Naive thymus-derived CD4-positive, alpha-beta T cell (primary cell): ENCODE measurements at regions of chr5 and their contacts with region 1.

Region 1: GRCh38 chr5:95961617-95962474 is at the start of gene ELL2:
- DNase-seq: peak; percentile 85 to 98 (median 90)
- ATAC-seq: peak; percentile 93
- H3K4me3 ChIP-seq: peak within 1 kb of the TSS; percentile 73
- H3K4me3 Mint-ChIP-seq: peak within 1 kb of the TSS; percentile 94 to 99 (median 96)
- H3K27ac ChIP-seq: peak within 1 kb of the TSS; percentile 90
- H3K27ac Mint-ChIP-seq: peak within 1 kb of the TSS; percentile 87 to 99 (median 98)
- H3K4me1 ChIP-seq: peaks cover 12 to 13% of the 10 kb centered on the region in 2 donors
- H3K4me1 Mint-ChIP-seq: peaks cover 30 to 43% (median 34%) of the 10 kb centered on the region in 7 donors
- H3K27me3 ChIP-seq: no peaks in the 10 kb centered on the region
- H3K27me3 Mint-ChIP-seq: peaks cover 0 to 3% (median 0%) of the 10 kb centered on the region in 5 donors
- total RNA-seq, gene ELL2: 12.6 to 65.8 (median 41.3) TPM

Region 2: GRCh38 chr5:94111209-94112004 is 1850.4 kb before region 1 on chr5:
- CTCF ChIA-PET with region 1: no interaction called
- POLR2A ChIA-PET with region 1: no interaction called
- intact Hi-C with region 1: loop called in 1 of 2 experiments (anchors 5 kb)
- DNase-seq: peak; percentile 77 to 93 (median 90)
- ATAC-seq: peak; percentile 96
- H3K4me3 ChIP-seq: peak overlapping the region; percentile 90
- H3K4me3 Mint-ChIP-seq: peak overlapping the region; percentile 88 to 97 (median 95)
- H3K27ac ChIP-seq: peak overlapping the region; percentile 85
- H3K27ac Mint-ChIP-seq: peak overlapping the region; percentile 93 to 97 (median 96)
- H3K4me1 ChIP-seq: peaks cover 8 to 10% of the 10 kb centered on the region in 2 donors
- H3K4me1 Mint-ChIP-seq: peaks cover 21 to 50% (median 47%) of the 10 kb centered on the region in 7 donors
- H3K27me3 ChIP-seq: no peaks in the 10 kb centered on the region
- H3K27me3 Mint-ChIP-seq: peaks cover 0 to 15% (median 14%) of the 10 kb centered on the region in 5 donors

Region 3: GRCh38 chr5:95620030-95620869 is 341.6 kb before region 1 on chr5 and contains the start of gene GPR150:
- CTCF ChIA-PET with region 1: no interaction called
- POLR2A ChIA-PET with region 1: no interaction called
- intact Hi-C with region 1: loop called in 1 of 2 experiments (anchors 2 kb)
- DNase-seq: peak; percentile 44 to 67 (median 61)
- ATAC-seq: peak; percentile 77
- H3K4me3 ChIP-seq: peak within 1 kb of the TSS; percentile 75
- H3K4me3 Mint-ChIP-seq: peak within 1 kb of the TSS; percentile 88 to 96 (median 92)
- H3K27ac ChIP-seq: peak within 1 kb of the TSS; percentile 71
- H3K27ac Mint-ChIP-seq: peak within 1 kb of the TSS; percentile 60 to 87 (median 81)
- H3K4me1 ChIP-seq: peaks cover 22 to 46% of the 10 kb centered on the region in 2 donors
- H3K4me1 Mint-ChIP-seq: peaks cover 34 to 82% (median 67%) of the 10 kb centered on the region in 7 donors
- H3K27me3 ChIP-seq: no peaks in the 10 kb centered on the region
- H3K27me3 Mint-ChIP-seq: peaks cover 0 to 18% (median 0%) of the 10 kb centered on the region in 5 donors
- total RNA-seq, gene GPR150: 0.48 to 1.5 (median 1.1) TPM

Region 4: DNA sequence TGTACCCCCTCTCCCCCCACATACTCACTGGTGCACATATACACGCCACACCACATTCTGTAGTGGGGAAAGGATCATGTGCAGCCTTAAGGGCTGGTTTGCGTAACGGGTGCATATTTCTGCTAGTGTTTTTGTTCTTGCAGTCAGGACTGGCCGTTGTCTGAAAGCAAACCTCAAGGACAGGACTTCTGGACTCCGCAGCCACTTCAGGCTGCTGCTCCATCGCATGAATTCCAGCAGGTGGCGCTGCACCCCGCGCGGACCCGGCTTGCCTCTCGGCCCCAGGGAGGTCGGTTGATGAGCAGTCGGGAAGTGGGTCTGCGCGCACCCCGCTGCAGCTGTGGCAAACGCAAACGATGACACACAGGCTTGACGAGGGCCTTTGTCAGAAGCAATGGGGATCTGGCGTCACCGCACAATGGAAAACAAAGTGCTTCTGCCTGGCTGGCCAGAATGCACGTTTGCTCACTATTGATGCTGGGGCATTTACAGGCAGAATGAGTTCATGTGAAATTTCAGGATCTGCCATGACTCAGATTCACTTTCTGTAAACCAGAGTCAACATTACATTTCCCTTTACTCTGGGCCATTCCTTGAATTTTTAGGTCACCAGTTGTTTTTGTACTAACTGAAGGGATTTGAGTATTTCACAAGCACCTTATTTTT is 103.1 kb before region 1 on chr5:
- CTCF ChIA-PET with region 1: interaction called, 4 read pairs
- POLR2A ChIA-PET with region 1: no interaction called
- intact Hi-C with region 1: loop called (anchors 1 to 2 kb)
- DNase-seq: peak; percentile 81 to 91 (median 87)
- ATAC-seq: peak; percentile 94
- H3K4me3 ChIP-seq: no peak overlapping the region
- H3K4me3 Mint-ChIP-seq: peak overlapping the region; percentile 25 to 78 (median 62)
- H3K27ac ChIP-seq: no peak overlapping the region
- H3K27ac Mint-ChIP-seq: peak overlapping the region; percentile 10 to 85 (median 56)
- H3K4me1 ChIP-seq: no peaks in the 10 kb centered on the region
- H3K4me1 Mint-ChIP-seq: peaks cover 11 to 43% (median 16%) of the 10 kb centered on the region in 7 donors
- H3K27me3 ChIP-seq: no peaks in the 10 kb centered on the region
- H3K27me3 Mint-ChIP-seq: peaks cover 0 to 18% (median 14%) of the 10 kb centered on the region in 5 donors

Region 5: DNA sequence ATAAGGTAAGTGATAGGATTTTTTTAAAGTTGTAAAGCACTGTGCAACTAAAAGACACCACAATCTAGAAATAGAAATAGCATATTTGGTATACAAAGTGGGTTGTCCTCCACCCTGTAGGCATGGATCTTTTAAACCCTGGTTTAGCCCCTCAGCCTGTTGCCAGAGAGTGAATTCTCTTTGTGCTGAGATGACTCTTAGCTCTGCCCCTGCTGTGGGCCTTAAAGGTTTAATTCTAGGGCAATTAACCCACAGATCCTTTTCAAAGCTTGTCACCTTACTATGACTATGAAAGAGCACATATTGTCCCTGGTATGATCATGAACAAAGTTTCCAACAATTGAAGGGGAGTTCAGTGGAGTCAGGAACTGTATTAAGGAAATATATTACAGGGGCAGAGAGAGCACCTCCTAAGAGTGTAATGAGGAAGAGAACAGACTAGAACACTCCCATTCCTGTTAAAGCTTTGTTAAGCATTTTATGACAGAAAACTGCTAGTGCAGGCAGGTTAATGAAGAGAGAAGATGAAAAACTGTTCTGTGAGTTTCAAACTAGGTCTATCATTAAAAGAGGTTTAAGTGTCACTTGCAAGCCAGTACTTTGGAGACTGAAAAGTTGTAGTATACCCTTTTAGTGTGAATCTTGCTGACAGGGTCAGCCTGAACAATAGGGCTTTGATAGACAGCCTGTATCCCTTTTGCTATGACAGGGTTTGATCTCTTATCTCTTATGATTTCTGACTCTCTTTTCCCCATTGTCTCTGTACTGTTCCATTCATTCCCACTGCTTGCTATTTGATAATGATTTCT is 103.9 kb after region 1 on chr5:
- CTCF ChIA-PET with region 1: no interaction called
- POLR2A ChIA-PET with region 1: no interaction called
- intact Hi-C with region 1: loop called in 1 of 2 experiments (anchors 2 kb)
- DNase-seq: no peak
- ATAC-seq: no peak
- H3K4me3 ChIP-seq: no peak overlapping the region
- H3K4me3 Mint-ChIP-seq: peak overlapping the region in 1 of 10 donors; percentile 7
- H3K27ac ChIP-seq: no peak overlapping the region
- H3K27ac Mint-ChIP-seq: peak overlapping the region in 1 of 9 donors; percentile 81
- H3K4me1 ChIP-seq: no peaks in the 10 kb centered on the region
- H3K4me1 Mint-ChIP-seq: peaks cover 0 to 30% (median 0%) of the 10 kb centered on the region in 7 donors
- H3K27me3 ChIP-seq: no peaks in the 10 kb centered on the region
- H3K27me3 Mint-ChIP-seq: no peaks in the 10 kb centered on the region

Region 6: GRCh38 chr5:96601811-96602244 is 640.0 kb after region 1 on chr5:
- CTCF ChIA-PET with region 1: no interaction called
- POLR2A ChIA-PET with region 1: no interaction called
- intact Hi-C with region 1: loop called in 1 of 2 experiments (anchors 5 kb)
- DNase-seq: peak in 7 of 9 donors; percentile 36 to 68 (median 65)
- ATAC-seq: peak; percentile 87
- H3K4me3 ChIP-seq: no peak overlapping the region
- H3K4me3 Mint-ChIP-seq: peak overlapping the region in 1 of 10 donors; percentile 2
- H3K27ac ChIP-seq: no peak overlapping the region
- H3K27ac Mint-ChIP-seq: no peak overlapping the region
- H3K4me1 ChIP-seq: no peaks in the 10 kb centered on the region
- H3K4me1 Mint-ChIP-seq: peaks cover 0 to 3% (median 0%) of the 10 kb centered on the region in 7 donors
- H3K27me3 ChIP-seq: no peaks in the 10 kb centered on the region
- H3K27me3 Mint-ChIP-seq: peaks cover 4 to 16% (median 4%) of the 10 kb centered on the region in 5 donors

Region 7: DNA sequence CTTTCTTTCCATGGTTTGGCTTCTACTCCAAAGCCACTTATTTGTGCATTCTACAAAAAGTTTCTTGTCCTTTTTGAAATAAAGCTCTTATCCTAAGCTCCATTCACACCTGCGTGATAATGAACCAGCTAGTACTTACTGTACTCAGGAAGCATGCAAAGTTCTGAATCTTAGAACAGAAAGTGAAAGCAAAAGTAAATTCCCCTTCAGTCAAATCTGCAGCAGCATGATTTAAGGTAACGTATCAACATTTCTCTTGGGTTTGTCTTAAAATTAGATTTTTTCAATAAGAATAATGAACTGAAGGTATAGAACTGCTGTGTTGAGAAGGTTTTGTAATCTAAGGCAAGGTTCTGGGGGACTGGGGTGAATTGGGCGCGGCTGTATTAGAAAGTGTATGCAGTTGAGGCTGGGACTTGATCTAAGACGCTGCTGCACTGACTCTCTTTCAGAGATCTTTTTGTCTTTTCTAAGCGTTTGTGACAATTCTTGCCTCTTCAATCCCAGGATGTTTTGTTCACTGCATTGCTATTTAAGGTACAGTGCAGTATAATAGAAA is 914.5 kb after region 1 on chr5 and contains the start of gene ERAP2:
- CTCF ChIA-PET with region 1: no interaction called
- POLR2A ChIA-PET with region 1: no interaction called
- intact Hi-C with region 1: loop called in 1 of 2 experiments (anchors 2 kb)
- DNase-seq: peak in 7 of 9 donors; percentile 53 to 73 (median 64)
- ATAC-seq: peak; percentile 79
- H3K4me3 ChIP-seq: peak within 1 kb of the TSS; percentile 85
- H3K4me3 Mint-ChIP-seq: peak within 1 kb of the TSS; percentile 81 to 99 (median 96)
- H3K27ac ChIP-seq: peak within 1 kb of the TSS; percentile 80
- H3K27ac Mint-ChIP-seq: peak within 1 kb of the TSS; percentile 91 to 99 (median 97)
- H3K4me1 ChIP-seq: peaks cover 26 to 56% of the 10 kb centered on the region in 2 donors
- H3K4me1 Mint-ChIP-seq: peaks cover 44 to 76% (median 73%) of the 10 kb centered on the region in 7 donors
- H3K27me3 ChIP-seq: no peaks in the 10 kb centered on the region
- H3K27me3 Mint-ChIP-seq: no peaks in the 10 kb centered on the region
- total RNA-seq, gene ERAP2: 42.5 to 158 (median 97.2) TPM